Esophagus muscularis mucosa (tissue), 4 donors: ENCODE measurements at regions of chr6 and their contacts with region 1.

Region 1: DNA sequence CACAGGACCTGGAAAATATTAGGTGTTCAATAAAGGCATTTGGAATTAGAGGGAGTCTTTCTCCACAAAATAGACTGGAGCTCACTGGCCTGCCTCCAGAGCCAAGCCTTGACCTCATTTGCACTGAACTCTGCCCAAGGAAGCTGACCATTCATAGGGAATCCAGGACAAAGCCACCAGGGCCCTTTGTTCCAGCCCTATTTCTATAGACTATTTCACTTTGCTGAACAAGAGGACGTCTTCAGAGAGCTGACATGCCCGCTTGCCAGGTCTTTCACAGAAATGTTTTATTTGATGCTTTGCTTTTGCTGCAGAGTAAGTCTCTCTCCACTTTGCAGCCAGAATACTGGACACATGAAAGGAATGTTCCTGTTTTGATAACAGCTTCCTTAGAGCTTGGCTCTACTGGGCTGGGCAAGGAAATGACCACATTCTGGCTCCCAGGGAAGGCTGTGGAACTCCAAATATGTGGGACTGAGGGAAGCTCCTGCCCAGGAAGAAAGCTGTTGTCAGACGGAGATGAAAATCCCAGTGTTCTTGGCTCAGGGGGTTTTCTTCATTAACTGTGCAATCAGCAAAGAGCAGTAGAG is 194.3 kb upstream of the CDYL start:
- DNase-seq: peak; percentile 91
- H3K4me3 ChIP-seq: no peak overlapping the region
- H3K27ac ChIP-seq: peak overlapping the region; percentile 41 to 69 (median 56)
- H3K4me1 ChIP-seq: peaks cover 9 to 45% (median 32%) of the 10 kb centered on the region in 4 donors
- H3K27me3 ChIP-seq: no peaks in the 10 kb centered on the region
- CTCF ChIP-seq: no peak
- EP300 ChIP-seq: no peak
- POLR2A ChIP-seq: no peak

Region 2: DNA sequence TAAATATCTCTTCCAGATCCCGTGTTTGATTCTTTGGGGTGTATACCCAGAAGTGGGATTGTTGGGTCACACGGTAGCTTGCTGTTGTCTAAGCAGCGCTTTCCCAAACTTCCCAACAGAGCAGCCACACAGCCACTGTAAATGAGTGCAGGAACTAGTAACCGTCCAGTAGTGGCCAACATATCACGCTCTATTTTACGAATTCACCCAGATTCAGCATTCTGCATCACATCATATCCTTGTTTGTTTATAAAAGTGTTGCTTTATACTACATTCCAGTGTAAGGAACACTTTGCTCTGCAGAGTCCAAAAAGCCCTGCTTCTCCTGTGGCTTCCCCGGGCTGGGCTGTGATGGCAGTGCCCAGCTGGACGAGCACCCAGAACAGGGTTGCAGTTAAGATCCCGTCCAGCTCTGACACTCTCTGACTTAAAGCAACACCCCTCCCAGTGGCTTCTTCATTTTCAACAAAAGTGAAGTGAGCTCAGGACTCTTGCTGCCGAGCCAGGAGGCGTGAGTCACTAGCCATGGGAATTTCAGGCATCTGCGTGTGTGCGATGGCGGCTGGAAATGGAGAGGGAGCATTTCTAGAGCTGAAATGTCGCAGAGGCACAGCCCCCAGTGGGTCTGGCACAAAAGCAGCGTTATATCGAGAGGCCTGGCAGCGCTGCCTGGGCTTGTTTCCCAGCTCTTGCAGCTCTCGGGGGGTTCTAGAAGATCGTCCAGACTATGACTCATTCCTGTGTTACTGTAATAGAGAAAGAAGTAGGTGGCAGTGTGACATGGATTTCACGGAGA is 230.2 kb before region 1 on chr6:
- intact Hi-C with region 1: loop called (anchors 5 kb)
- DNase-seq: no peak
- H3K4me3 ChIP-seq: peak overlapping the region; percentile 28 to 46 (median 34)
- H3K27ac ChIP-seq: peak overlapping the region; percentile 75 to 86 (median 80)
- H3K4me1 ChIP-seq: peaks cover 26 to 45% (median 31%) of the 10 kb centered on the region in 4 donors
- H3K27me3 ChIP-seq: no peaks in the 10 kb centered on the region
- CTCF ChIP-seq: peak in 2 of 3 experiments; percentile 2 to 24
- EP300 ChIP-seq: no peak
- POLR2A ChIP-seq: no peak